Activated CD4-positive, alpha-beta T cell treated with anti-CD3 and anti-CD28 coated beads, Interleukin-2, amount 10 ng/mL, durations not matched to agents 24 days and 14 days (primary cell): ENCODE measurements at regions of chr7 and their contacts with region 1.

Region 1: GRCh38 chr7:115618676-115619075 is 411.9 kb downstream of the TFEC start:
- DNase-seq: no peak
- H3K4me3 Mint-ChIP-seq: no peak overlapping the region
- H3K27ac Mint-ChIP-seq: no peak overlapping the region
- H3K4me1 Mint-ChIP-seq: no peaks in the 10 kb centered on the region
- H3K27me3 Mint-ChIP-seq: no peaks in the 10 kb centered on the region

Region 2: DNA sequence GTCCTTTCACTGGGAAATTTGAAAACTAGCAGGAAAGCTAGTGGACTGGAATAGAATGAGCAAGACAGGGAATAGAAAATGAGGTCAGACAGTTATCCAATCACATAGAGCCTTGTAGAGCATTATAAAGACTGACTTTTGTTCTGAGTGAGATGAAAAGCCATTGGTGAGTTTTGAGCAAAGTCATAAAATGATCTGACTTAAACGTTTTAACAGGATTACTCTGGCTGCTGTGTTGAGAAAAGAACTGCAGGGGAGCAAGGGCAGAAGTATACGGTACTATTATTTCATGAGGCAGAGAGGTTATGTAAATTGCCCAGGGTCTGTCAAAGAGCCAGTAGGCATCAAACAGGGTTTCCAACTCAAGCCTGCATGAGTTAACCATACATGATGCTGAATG is 18.5 kb after region 1 on chr7:
- intact Hi-C with region 1: loop called (anchors 1 kb)
- DNase-seq: no peak
- H3K4me3 Mint-ChIP-seq: no peak overlapping the region
- H3K27ac Mint-ChIP-seq: no peak overlapping the region
- H3K4me1 Mint-ChIP-seq: no peaks in the 10 kb centered on the region
- H3K27me3 Mint-ChIP-seq: no peaks in the 10 kb centered on the region